GM23248 (cell line): ENCODE measurements at regions of chr18 and their contacts with region 1.

Region 1: DNA sequence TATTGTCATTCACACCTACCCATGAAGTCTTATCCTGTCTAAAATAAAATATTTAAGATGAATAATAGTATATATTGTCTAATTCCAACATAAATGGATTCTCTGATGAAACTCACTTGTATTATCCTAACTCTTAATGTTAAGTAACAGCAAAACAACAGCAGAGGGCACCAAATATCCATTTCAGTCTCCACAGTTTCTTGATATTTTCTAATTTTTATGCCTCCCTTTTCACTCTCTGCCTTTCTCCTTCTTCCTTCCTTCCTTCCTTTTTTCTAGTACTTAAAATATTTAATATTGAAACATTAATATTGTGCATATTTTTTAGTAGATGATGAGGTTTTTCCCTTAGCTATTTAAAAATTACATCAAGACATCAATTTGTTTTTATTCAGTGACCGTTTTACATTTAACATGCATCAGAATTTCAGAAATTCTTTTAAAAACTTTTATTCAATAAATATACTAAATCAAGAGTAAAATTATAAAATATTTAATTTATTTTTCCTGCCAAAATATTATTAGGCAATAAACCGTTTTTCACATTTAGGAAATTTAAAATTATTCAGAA is 97.6 kb downstream of the WDR7 start:
- DNase-seq: peak; percentile 61
- H3K4me3 ChIP-seq: no peak overlapping the region
- H3K27ac ChIP-seq: no peak overlapping the region
- H3K4me1 ChIP-seq: 0 out of 2 replicates have a peak, but pooled peaks cover 3% of the 10 kb centered on the region
- H3K27me3 ChIP-seq: no peaks in the 10 kb centered on the region

Region 2: DNA sequence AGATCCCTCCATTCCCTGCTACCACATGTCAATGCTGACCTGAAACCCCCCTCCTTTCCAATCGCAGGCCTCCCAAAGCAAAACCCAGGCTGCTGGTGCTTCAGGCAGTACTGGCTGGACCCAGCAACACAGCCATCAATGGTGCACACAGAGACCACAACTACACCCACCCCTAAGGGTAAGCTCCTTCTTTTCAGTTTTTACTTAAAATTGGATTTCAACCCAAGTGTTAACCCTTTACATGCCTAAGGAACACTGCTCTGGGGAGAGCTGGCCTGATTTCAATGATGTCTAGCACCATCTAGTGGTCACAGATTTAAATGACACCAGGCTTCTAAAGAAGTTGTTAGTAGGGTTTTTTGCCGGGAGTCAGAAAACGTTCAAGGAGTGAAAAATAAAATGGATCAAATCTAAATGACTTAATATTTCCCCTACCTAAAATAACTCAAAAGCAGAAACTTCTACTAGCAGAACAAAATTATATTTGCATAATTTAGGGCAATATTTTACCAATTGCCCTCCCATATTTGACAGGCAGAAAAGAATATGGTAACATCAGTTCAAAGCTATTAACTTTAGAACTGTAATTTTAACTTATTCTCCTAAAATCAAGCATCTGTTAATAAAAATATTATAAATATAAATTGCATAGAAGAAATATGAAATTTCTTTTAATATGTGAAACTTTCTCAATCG is 813.1 kb after region 1 on chr18:
- in situ Hi-C with region 1: loop called (anchors 25 kb)
- DNase-seq: peak; percentile 59
- H3K4me3 ChIP-seq: no peak overlapping the region
- H3K27ac ChIP-seq: no peak overlapping the region
- H3K4me1 ChIP-seq: 0 out of 2 replicates have a peak, but pooled peaks cover 5% of the 10 kb centered on the region
- H3K27me3 ChIP-seq: no peaks in the 10 kb centered on the region